Naive thymus-derived CD4-positive, alpha-beta T cell (primary cell): ENCODE measurements at regions of chr20 and their contacts with region 1.

Region 1: GRCh38 chr20:24992487-24993205 is at the start of gene APMAP:
- DNase-seq: peak; percentile 88 to 97 (median 94)
- ATAC-seq: peak; percentile 96
- H3K4me3 ChIP-seq: peak within 1 kb of the TSS; percentile 90
- H3K4me3 Mint-ChIP-seq: peak within 1 kb of the TSS; percentile 88 to 96 (median 94)
- H3K27ac ChIP-seq: peak within 1 kb of the TSS; percentile 97
- H3K27ac Mint-ChIP-seq: peak within 1 kb of the TSS; percentile 93 to 98 (median 97)
- H3K4me1 ChIP-seq: peaks cover 27 to 36% of the 10 kb centered on the region in 2 donors
- H3K4me1 Mint-ChIP-seq: peaks cover 39 to 71% (median 57%) of the 10 kb centered on the region in 7 donors
- H3K27me3 ChIP-seq: no peaks in the 10 kb centered on the region
- H3K27me3 Mint-ChIP-seq: peaks cover 0 to 16% (median 0%) of the 10 kb centered on the region in 5 donors
- total RNA-seq, gene APMAP: 28.2 to 47.3 (median 38.8) TPM

Region 2: GRCh38 chr20:23357767-23358591 is 1634.7 kb before region 1 on chr20:
- CTCF ChIA-PET with region 1: no interaction called
- POLR2A ChIA-PET with region 1: no interaction called
- intact Hi-C with region 1: loop called in 1 of 2 experiments (anchors 2 kb)
- DNase-seq: peak; percentile 97 to 99 (median 98)
- ATAC-seq: peak; percentile 81
- H3K4me3 ChIP-seq: peak overlapping the region; percentile 85
- H3K4me3 Mint-ChIP-seq: peak overlapping the region; percentile 91 to 95 (median 93)
- H3K27ac ChIP-seq: peak overlapping the region; percentile 92
- H3K27ac Mint-ChIP-seq: peak overlapping the region; percentile 94 to 98 (median 97)
- H3K4me1 ChIP-seq: peaks cover 14 to 22% of the 10 kb centered on the region in 2 donors
- H3K4me1 Mint-ChIP-seq: peaks cover 17 to 38% (median 34%) of the 10 kb centered on the region in 7 donors
- H3K27me3 ChIP-seq: no peaks in the 10 kb centered on the region
- H3K27me3 Mint-ChIP-seq: peaks cover 0 to 4% (median 0%) of the 10 kb centered on the region in 5 donors

Region 3: GRCh38 chr20:24100385-24101011 is 892.1 kb before region 1 on chr20:
- CTCF ChIA-PET with region 1: interaction called, 3 read pairs
- POLR2A ChIA-PET with region 1: no interaction called
- intact Hi-C with region 1: loop called in 1 of 2 experiments (anchors 5 kb)
- DNase-seq: peak; percentile 18 to 71 (median 59)
- ATAC-seq: peak; percentile 95
- H3K4me3 ChIP-seq: no peak overlapping the region
- H3K4me3 Mint-ChIP-seq: no peak overlapping the region
- H3K27ac ChIP-seq: no peak overlapping the region
- H3K27ac Mint-ChIP-seq: peak overlapping the region in 7 of 9 donors; percentile 1 to 82 (median 57)
- H3K4me1 ChIP-seq: peaks cover 0 to 4% of the 10 kb centered on the region in 2 donors
- H3K4me1 Mint-ChIP-seq: peaks cover 5 to 18% (median 8%) of the 10 kb centered on the region in 7 donors
- H3K27me3 ChIP-seq: no peaks in the 10 kb centered on the region
- H3K27me3 Mint-ChIP-seq: peaks cover 0 to 5% (median 0%) of the 10 kb centered on the region in 5 donors

Region 4: GRCh38 chr20:24891546-24892393 is 100.9 kb before region 1 on chr20:
- CTCF ChIA-PET with region 1: no interaction called
- POLR2A ChIA-PET with region 1: no interaction called
- intact Hi-C with region 1: no loop called
- DNase-seq: no peak
- ATAC-seq: no peak
- H3K4me3 ChIP-seq: no peak overlapping the region
- H3K4me3 Mint-ChIP-seq: no peak overlapping the region
- H3K27ac ChIP-seq: no peak overlapping the region
- H3K27ac Mint-ChIP-seq: no peak overlapping the region
- H3K4me1 ChIP-seq: no peaks in the 10 kb centered on the region
- H3K4me1 Mint-ChIP-seq: no peaks in the 10 kb centered on the region
- H3K27me3 ChIP-seq: no peaks in the 10 kb centered on the region
- H3K27me3 Mint-ChIP-seq: peaks cover 0 to 10% (median 4%) of the 10 kb centered on the region in 5 donors

Region 5: GRCh38 chr20:25065625-25066338 is 73.1 kb after region 1 on chr20:
- CTCF ChIA-PET with region 1: interaction called, 122 read pairs
- POLR2A ChIA-PET with region 1: interaction called, 52 read pairs
- intact Hi-C with region 1: loop called (anchors 1 kb)
- DNase-seq: peak in 8 of 9 donors; percentile 37 to 72 (median 68)
- ATAC-seq: peak; percentile 87
- H3K4me3 ChIP-seq: no peak overlapping the region
- H3K4me3 Mint-ChIP-seq: no peak overlapping the region
- H3K27ac ChIP-seq: no peak overlapping the region
- H3K27ac Mint-ChIP-seq: no peak overlapping the region
- H3K4me1 ChIP-seq: no peaks in the 10 kb centered on the region
- H3K4me1 Mint-ChIP-seq: peaks cover 0 to 8% (median 5%) of the 10 kb centered on the region in 7 donors
- H3K27me3 ChIP-seq: no peaks in the 10 kb centered on the region
- H3K27me3 Mint-ChIP-seq: peaks cover 0 to 51% (median 18%) of the 10 kb centered on the region in 5 donors

Region 6: DNA sequence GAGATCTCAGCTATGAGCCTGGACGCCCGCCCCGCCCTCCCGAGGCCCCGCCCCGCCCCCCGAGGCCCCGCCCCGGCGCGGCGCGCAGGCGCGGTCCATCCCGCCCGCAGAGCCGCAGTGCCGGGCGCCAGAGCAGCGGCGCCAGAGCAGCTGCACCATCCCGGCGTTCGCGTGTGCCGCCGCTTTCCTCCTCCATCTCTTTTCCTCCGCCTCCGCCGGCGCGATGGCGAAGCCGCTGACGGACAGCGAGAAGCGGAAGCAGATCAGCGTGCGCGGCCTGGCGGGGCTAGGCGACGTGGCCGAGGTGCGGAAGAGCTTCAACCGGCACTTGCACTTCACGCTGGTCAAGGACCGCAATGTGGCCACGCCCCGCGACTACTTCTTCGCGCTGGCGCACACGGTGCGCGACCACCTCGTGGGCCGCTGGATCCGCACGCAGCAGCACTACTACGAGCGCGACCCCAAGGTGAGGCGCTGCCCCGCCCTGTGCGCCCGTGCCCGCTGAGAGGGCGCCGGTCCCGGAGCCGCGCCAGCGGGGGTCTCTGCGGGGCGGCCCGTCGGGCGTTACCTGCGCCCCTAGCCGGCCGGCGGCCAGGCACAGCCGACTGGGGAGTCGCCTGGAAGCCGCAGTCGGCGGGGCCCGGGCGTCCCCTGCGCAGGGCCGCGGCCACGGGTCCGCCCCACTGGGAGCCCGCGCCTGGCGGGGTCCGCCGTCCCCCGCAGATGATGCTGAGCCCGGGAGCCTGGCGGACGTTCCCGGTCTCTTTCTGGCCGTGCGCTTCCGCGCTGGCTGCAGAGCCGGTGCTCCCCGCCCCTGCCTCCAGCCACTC is 255.5 kb after region 1 on chr20 and contains the start of gene PYGB:
- CTCF ChIA-PET with region 1: no interaction called
- POLR2A ChIA-PET with region 1: no interaction called
- intact Hi-C with region 1: loop called (anchors 1 kb)
- DNase-seq: peak; percentile 52 to 84 (median 68)
- ATAC-seq: peak; percentile 95
- H3K4me3 ChIP-seq: peak within 1 kb of the TSS; percentile 93
- H3K4me3 Mint-ChIP-seq: peak within 1 kb of the TSS; percentile 85 to 99 (median 94)
- H3K27ac ChIP-seq: peak within 1 kb of the TSS; percentile 75
- H3K27ac Mint-ChIP-seq: peak within 1 kb of the TSS; percentile 79 to 97 (median 87)
- H3K4me1 ChIP-seq: peaks cover 5 to 7% of the 10 kb centered on the region in 2 donors
- H3K4me1 Mint-ChIP-seq: peaks cover 19 to 60% (median 49%) of the 10 kb centered on the region in 7 donors
- H3K27me3 ChIP-seq: no peaks in the 10 kb centered on the region
- H3K27me3 Mint-ChIP-seq: peaks cover 0 to 13% (median 0%) of the 10 kb centered on the region in 5 donors
- total RNA-seq, gene PYGB: 29.8 to 45.2 (median 43.6) TPM

Region 7: DNA sequence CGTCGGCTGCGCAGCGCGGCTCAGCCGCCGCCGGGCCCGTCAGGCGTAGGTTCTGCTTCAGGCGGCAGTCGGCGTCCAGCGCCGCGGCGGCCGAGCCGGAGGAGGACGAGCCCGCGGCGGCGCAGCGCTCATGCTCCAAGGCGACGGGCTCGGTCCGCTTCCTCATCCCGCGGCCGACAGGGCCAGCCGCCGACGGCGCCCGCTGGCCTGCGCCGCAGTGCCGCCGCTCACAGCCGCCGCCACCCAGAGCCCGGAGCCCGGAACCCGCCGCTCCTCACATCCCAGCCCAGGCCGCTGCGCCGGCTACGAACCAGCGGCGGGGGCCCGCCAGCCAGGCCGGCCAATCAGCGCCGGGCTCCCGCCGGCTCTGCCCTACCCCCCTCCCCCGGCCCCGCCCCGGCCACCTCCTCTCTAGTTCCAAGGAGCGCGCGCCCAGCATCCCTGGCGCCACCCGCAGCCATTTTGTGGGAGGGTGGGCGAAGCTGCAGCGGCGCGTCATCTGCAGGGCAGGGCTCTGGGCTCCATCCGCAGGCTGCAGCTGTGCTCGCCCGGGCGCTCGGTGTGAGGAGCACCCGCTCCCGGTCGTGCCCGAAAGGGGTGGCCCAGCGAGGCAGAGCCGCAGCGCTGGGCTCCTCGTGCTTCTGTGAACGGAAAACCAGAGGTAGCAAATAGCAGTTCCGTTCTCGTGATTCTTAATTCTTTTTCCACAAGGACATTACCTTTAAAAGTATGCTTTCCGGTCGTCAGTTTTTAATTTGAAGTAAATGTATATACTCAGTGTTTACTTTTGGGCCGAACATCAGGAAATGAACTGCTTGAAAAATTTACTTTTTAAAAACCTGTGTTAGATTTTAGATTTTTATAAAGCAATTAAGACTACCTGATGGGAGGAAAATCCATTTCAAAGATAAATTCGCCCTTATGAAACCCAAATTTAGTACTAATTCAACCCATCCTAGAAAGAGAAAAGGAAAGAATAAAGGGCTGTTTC is 398.2 kb after region 1 on chr20 and contains the start of gene ABHD12:
- CTCF ChIA-PET with region 1: no interaction called
- POLR2A ChIA-PET with region 1: no interaction called
- intact Hi-C with region 1: loop called (anchors 1 to 2 kb)
- DNase-seq: peak; percentile 80 to 93 (median 89)
- ATAC-seq: peak; percentile 96
- H3K4me3 ChIP-seq: peak within 1 kb of the TSS; percentile 62
- H3K4me3 Mint-ChIP-seq: peak within 1 kb of the TSS; percentile 83 to 94 (median 88)
- H3K27ac ChIP-seq: peak within 1 kb of the TSS; percentile 74
- H3K27ac Mint-ChIP-seq: peak within 1 kb of the TSS; percentile 46 to 96 (median 82)
- H3K4me1 ChIP-seq: no peaks in the 10 kb centered on the region
- H3K4me1 Mint-ChIP-seq: peaks cover 5 to 22% (median 18%) of the 10 kb centered on the region in 7 donors
- H3K27me3 ChIP-seq: no peaks in the 10 kb centered on the region
- H3K27me3 Mint-ChIP-seq: peaks cover 0 to 6% (median 0%) of the 10 kb centered on the region in 5 donors
- total RNA-seq, gene ABHD12: 16.5 to 27.6 (median 22.5) TPM

Region 8: DNA sequence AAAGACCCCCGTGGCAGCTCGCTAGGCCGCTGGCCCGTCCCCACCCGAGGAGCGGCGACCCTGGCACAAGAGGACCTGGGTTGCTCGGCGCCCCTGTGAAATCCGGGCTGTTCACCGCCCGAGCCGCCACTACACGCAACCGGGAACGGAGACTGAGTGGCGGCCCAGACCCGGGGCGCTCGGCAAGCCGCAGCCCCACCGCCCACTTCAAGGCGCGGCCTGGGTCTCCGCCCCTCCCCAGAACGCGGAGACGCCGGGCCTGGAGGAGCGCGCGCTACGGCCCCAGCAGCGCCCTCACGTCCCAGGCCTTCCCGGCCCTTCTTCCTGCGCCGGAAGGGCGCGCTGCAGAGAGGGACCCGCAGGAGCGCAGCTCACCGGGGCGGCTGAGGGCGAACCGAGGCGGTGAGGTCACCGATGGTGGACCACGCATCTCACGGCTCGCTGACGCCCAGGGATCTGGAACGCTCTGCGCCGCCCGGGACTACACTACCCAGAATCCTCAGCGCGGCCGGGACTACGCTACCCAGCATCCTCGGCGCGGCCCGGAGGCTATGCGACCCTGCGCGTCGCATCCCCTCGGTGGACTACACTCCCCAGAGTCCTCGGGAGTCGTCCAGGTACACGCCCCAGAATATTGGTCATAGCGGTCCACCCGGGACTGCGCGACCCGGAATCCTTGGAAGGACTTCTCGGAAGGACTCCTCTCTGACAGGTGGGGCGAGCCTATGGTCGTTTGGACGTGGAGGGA is 703.9 kb after region 1 on chr20 and contains the start of gene ZNF337:
- CTCF ChIA-PET with region 1: no interaction called
- POLR2A ChIA-PET with region 1: no interaction called
- intact Hi-C with region 1: loop called in 1 of 2 experiments (anchors 2 kb)
- DNase-seq: peak; percentile 84 to 94 (median 89)
- ATAC-seq: peak; percentile 100
- H3K4me3 ChIP-seq: peak within 1 kb of the TSS; percentile 85
- H3K4me3 Mint-ChIP-seq: peak within 1 kb of the TSS; percentile 94 to 97 (median 96)
- H3K27ac ChIP-seq: peak within 1 kb of the TSS; percentile 85
- H3K27ac Mint-ChIP-seq: peak within 1 kb of the TSS; percentile 84 to 96 (median 93)
- H3K4me1 ChIP-seq: peaks cover 5 to 9% of the 10 kb centered on the region in 2 donors
- H3K4me1 Mint-ChIP-seq: peaks cover 19 to 58% (median 57%) of the 10 kb centered on the region in 7 donors
- H3K27me3 ChIP-seq: no peaks in the 10 kb centered on the region
- H3K27me3 Mint-ChIP-seq: peaks cover 0 to 5% (median 0%) of the 10 kb centered on the region in 5 donors
- total RNA-seq, gene ZNF337: 18.7 to 39.8 (median 21.2) TPM